ENCODE measurements at regions of chr2 and their contacts with region 1.

Region 1: GRCh38 chr2:192162392-192163042 is 32.2 kb downstream of the TMEFF2 start:
- DNase-seq: peak; percentile 65
- H3K4me3 ChIP-seq: no peak overlapping the region
- H3K27ac ChIP-seq: no peak overlapping the region
- H3K4me1 ChIP-seq: no peaks in the 10 kb centered on the region
- CTCF ChIP-seq: peak; percentile 100

Region 2: DNA sequence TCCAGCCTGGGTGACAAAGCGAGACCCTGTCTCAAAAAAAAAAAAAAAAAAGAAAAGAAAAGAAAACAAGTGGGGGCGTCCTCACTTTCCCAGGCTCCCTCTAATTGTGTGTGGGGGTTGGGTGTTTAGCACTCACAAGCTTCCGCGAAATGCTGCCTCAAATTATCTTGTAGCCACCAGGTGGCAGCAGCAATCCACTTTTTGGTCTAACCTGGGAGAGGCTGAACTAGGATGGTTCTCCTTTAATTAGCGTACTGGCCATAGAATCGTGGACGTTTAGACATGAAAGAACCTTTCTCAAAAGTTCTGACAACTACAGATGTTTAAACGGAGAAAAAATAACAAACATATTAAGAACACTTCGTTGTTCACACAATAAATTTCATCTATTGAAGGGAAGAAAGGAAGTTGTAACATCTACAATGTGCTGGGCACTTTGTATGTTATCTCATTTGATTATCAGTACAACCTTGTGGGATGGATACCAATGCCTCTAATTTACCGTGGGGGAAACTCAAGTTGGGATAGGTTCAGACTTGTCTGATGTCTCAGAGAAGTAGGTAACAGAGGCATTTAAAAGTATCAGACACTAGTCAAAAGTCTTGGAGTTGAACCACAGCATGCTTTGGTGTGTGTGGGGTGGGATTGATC is 607.3 kb before region 1 on chr2:
- CTCF ChIA-PET with region 1: interaction called, 3 read pairs
- POLR2A ChIA-PET with region 1: no interaction called
- intact Hi-C with region 1: loop called (anchors 1 kb)
- DNase-seq: peak; percentile 75
- H3K4me3 ChIP-seq: no peak overlapping the region
- H3K27ac ChIP-seq: no peak overlapping the region
- H3K4me1 ChIP-seq: no peaks in the 10 kb centered on the region
- CTCF ChIP-seq: peak; percentile 86

Region 3: GRCh38 chr2:191748059-191748461 is 414.5 kb before region 1 on chr2:
- CTCF ChIA-PET with region 1: no interaction called
- POLR2A ChIA-PET with region 1: no interaction called
- intact Hi-C with region 1: no loop called
- DNase-seq: no peak
- H3K4me3 ChIP-seq: no peak overlapping the region
- H3K27ac ChIP-seq: no peak overlapping the region
- H3K4me1 ChIP-seq: no peaks in the 10 kb centered on the region
- CTCF ChIP-seq: no peak

Region 4: DNA sequence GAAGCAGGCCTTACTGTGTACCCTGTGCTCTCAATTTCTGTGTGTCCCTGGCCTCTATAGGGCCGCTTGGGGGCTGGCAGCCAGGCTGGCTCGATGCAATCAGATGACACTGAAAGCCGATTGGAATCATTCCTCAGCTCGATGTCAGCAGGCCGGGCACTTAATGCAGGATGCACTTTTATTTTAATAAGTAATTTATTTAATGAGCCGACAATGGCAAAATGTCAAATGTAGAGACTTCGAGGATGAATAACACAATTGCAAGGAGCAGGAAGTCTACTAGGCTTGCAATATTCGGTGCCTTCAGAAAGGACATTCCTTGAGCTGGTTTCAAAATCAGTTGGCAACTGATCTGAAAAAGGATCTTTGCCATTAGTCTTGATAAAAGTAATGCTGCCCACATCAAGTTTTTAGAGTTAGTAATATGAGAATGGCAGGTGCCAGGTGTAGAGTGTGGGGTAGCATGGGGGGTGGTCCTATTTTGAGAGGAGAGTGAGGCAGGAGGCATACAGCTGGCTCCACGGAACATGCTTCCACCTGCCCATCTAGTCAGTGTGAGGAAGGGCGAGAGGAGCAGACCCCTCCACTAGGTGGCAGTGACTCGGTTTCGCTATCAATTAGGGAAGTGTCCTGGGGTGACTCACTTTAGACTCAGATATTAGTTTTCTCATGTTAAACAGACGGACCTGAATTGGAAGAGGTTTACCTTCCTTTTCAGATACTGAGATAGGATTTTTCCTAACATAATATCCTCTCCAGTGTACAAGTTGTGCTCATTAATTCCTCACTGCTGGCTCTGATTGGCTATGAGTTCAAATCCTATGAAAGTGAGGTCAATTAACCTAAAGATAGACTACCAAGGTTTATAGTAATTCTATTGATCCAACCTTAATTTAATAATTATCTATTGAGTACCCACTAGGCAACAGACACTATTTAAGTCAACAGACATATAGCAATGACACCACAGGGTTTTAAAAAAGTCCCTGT is 403.7 kb before region 1 on chr2:
- CTCF ChIA-PET with region 1: no interaction called
- POLR2A ChIA-PET with region 1: interaction called, 3 read pairs
- intact Hi-C with region 1: loop called (anchors 1 kb)
- DNase-seq: peak; percentile 62
- H3K4me3 ChIP-seq: no peak overlapping the region
- H3K27ac ChIP-seq: no peak overlapping the region
- H3K4me1 ChIP-seq: no peaks in the 10 kb centered on the region
- CTCF ChIP-seq: peak; percentile 85

Region 5: DNA sequence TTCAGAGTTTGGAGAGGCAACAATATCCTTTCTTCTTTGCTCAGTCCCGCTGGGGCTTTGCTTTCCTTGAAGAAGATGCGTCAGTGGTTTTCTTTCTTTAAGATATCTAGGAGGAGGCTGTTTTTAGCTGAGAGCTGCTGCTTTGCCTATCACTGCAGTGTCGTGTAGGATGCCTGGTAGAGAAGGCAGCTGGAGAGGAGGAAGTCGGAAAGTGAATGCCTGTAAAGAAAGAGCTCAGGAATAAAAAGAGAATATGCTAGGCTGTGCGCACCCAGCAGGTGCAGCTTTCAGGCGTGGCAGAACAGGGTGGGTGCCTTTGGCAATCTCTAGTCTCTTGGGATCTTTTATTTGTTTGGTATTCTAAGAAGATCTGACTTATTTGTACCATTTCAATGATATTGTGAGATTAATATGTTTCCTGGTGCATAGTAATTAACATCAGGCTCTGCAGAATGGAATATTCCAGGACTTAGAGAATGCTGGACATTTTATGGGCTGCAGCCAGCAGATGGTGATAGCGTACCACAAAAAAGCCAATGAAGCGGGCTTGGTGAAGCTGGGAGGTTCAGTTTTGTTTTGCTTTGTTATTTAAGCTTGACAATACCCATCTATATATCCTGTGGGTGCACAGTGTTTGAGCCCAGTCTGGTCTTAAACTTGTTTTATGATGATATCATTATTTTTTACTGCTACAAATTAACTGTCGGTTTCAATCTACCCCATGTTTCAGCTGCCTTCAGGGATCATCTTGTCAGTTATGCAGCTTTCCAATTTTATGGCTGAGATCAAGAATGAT is 350.5 kb before region 1 on chr2:
- CTCF ChIA-PET with region 1: no interaction called
- POLR2A ChIA-PET with region 1: no interaction called
- intact Hi-C with region 1: loop called (anchors 2 kb)
- DNase-seq: peak; percentile 31
- H3K4me3 ChIP-seq: no peak overlapping the region
- H3K27ac ChIP-seq: no peak overlapping the region
- H3K4me1 ChIP-seq: no peaks in the 10 kb centered on the region
- CTCF ChIP-seq: peak; percentile 81

Region 6: GRCh38 chr2:192073878-192074277 is 88.6 kb before region 1 on chr2:
- CTCF ChIA-PET with region 1: no interaction called
- POLR2A ChIA-PET with region 1: no interaction called
- intact Hi-C with region 1: no loop called
- DNase-seq: no peak
- H3K4me3 ChIP-seq: no peak overlapping the region
- H3K27ac ChIP-seq: no peak overlapping the region
- H3K4me1 ChIP-seq: no peaks in the 10 kb centered on the region
- CTCF ChIP-seq: no peak

Measured in OCI-LY7 (cell line).